ENCODE measurements at regions of chr9 and their contacts with region 1.

Region 1: DNA sequence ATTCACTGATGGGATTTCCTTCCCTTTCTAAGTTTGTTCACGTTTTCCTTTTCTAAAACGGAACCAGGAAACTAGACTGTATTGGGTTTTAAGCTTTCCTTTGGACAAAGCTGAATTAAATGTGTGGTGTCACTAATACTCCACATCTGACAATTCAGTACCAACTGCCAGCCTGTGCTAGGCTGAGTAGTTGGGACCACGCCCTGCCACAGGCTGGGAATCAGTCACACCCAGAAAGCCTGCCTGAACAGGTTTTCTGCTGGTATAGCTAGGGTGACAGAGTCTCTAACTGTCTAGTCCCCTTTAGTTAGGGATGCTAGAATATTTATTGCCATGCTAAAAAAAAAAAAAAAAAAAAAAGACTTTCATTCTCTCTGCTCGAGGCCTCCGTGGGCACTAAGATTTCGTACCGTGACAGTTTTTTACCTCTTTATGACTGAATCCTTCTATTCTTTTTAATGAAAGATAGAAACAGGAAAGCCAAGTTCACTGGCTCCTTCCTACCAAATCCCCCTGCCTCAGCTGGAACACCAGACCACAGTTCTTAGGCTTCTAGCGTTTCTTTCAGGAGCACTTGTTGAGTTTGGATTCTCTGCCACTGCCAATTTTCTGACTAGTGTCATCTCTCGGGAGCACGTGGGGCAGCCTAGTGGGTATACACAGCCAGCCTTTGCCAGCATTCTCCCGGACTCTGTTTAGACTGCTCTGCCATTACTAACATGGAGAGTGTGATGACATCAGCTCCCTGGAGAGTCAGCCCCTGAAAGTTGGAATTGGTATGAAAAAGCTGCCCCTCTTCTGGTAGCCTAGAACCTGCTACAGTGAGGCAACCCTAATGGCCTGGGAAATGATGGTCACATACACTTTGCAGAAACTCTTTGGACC is 15.9 kb downstream of the SPACA9 start:
- DNase-seq: no peak
- ATAC-seq: no peak
- H3K4me3 ChIP-seq: no peak overlapping the region
- H3K27ac ChIP-seq: no peak overlapping the region
- H3K4me1 ChIP-seq: no peaks in the 10 kb centered on the region
- H3K27me3 ChIP-seq: no peaks in the 10 kb centered on the region
- CTCF ChIP-seq: no peak

Region 2: GRCh38 chr9:131815971-131816873 is 1078.4 kb before region 1 on chr9:
- CTCF ChIA-PET with region 1: no interaction called
- POLR2A ChIA-PET with region 1: no interaction called
- in situ Hi-C with region 1: no loop called
- intact Hi-C with region 1: no loop called
- DNase-seq: no peak
- ATAC-seq: peak; percentile 70
- H3K4me3 ChIP-seq: peak overlapping the region in 1 of 2 experiments; percentile 23; a peak in 1 of 4 replicates
- H3K27ac ChIP-seq: no peak overlapping the region
- H3K4me1 ChIP-seq: no peaks in the 10 kb centered on the region; the same call in 1 of the 2 replicates
- H3K27me3 ChIP-seq: no peaks in the 10 kb centered on the region
- CTCF ChIP-seq: no peak; the same call in 1 of the 2 replicates

Region 3: GRCh38 chr9:132717326-132717945 is 177.2 kb before region 1 on chr9:
- CTCF ChIA-PET with region 1: no interaction called
- POLR2A ChIA-PET with region 1: no interaction called
- in situ Hi-C with region 1: no loop called
- intact Hi-C with region 1: no loop called
- DNase-seq: no peak
- ATAC-seq: no peak
- H3K4me3 ChIP-seq: no peak overlapping the region
- H3K27ac ChIP-seq: no peak overlapping the region
- H3K4me1 ChIP-seq: no peaks in the 10 kb centered on the region
- H3K27me3 ChIP-seq: no peaks in the 10 kb centered on the region
- CTCF ChIP-seq: no peak

Region 4: DNA sequence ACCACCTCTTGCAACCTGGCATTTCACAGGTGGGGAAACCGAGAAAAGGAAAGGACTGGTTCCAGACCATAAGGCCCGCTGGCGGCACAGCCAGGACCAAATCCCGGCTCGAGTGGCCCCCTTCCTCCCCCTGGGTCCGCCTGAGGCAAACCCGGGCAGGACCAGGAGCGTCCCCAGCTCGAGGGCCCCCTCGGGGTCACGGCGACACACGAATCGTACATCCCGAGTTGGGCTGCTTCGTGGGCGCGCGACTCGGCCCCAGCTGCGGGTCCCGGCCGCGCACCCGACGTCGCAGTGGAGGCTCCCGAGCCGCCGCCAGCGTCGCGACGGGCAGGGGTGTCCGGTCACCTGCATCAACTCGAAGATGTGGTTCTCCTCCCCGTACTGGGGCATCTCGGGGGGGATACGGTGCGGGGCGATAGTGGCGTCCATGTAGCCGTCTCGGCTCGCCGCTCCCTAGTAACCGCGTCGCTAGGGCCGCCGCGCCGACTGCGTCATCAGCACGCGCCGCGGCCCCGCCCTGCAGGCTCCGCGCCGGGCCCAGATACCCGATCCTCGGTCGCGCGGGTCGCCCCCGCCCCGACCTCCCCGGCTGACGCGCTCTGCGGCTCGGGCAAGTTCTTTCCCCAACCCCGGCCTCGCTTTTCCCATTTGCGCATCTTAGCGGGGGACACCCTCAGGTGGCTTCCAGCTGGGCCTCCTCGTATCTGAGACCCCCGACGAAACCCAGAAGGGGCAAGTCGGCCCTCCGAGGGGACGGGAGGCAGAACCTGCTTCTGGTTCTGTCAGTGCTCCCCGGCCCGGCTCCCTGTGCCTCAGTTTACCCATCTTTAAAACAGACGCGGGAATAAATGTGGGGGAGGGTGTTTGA is 16.5 kb before region 1 on chr9 and contains the start of gene AK8:
- CTCF ChIA-PET with region 1: no interaction called
- POLR2A ChIA-PET with region 1: no interaction called
- in situ Hi-C with region 1: no loop called
- intact Hi-C with region 1: no loop called
- DNase-seq: no peak
- ATAC-seq: peak; percentile 92
- H3K4me3 ChIP-seq: peak within 1 kb of the TSS; percentile 92 to 95
- H3K27ac ChIP-seq: peak within 1 kb of the TSS; percentile 81
- H3K4me1 ChIP-seq: peaks cover 6% of the 10 kb centered on the region
- H3K27me3 ChIP-seq: no peaks in the 10 kb centered on the region
- CTCF ChIP-seq: no peak
- total RNA-seq, gene AK8: 0.39 TPM

Region 5: GRCh38 chr9:132957805-132958204 is 63.2 kb after region 1 on chr9:
- CTCF ChIA-PET with region 1: interaction called, 10 read pairs
- POLR2A ChIA-PET with region 1: no interaction called
- in situ Hi-C with region 1: no loop called
- intact Hi-C with region 1: no loop called
- DNase-seq: no peak
- ATAC-seq: no peak
- H3K4me3 ChIP-seq: no peak overlapping the region
- H3K27ac ChIP-seq: no peak overlapping the region
- H3K4me1 ChIP-seq: no peaks in the 10 kb centered on the region
- H3K27me3 ChIP-seq: no peaks in the 10 kb centered on the region
- CTCF ChIP-seq: no peak

Measured in Panc1 (cell line).